Activated naive CD4-positive, alpha-beta T cell treated with anti-CD3 and anti-CD28 coated beads for 36 hours (primary cell): ENCODE measurements at regions of chr5 and their contacts with region 1.

Region 1: GRCh38 chr5:16465544-16466466 is at the start of gene ZNF622:
- DNase-seq: peak; percentile 92
- H3K4me3 Mint-ChIP-seq: peak within 1 kb of the TSS; percentile 96
- H3K27ac Mint-ChIP-seq: peak within 1 kb of the TSS; percentile 93
- H3K4me1 Mint-ChIP-seq: peaks cover 70% of the 10 kb centered on the region
- H3K27me3 Mint-ChIP-seq: no peaks in the 10 kb centered on the region
- total RNA-seq, gene ZNF622: 25.7 to 25.9 TPM

Region 2: GRCh38 chr5:15105796-15106393 is 1359.9 kb before region 1 on chr5:
- CTCF ChIA-PET with region 1: no interaction called
- intact Hi-C with region 1: loop called (anchors 10 kb)
- DNase-seq: peak; percentile 56
- H3K4me3 Mint-ChIP-seq: no peak overlapping the region
- H3K27ac Mint-ChIP-seq: no peak overlapping the region
- H3K4me1 Mint-ChIP-seq: peaks cover 4% of the 10 kb centered on the region
- H3K27me3 Mint-ChIP-seq: no peaks in the 10 kb centered on the region

Region 3: GRCh38 chr5:16508730-16509531 is 43.1 kb after region 1 on chr5:
- CTCF ChIA-PET with region 1: no interaction called
- intact Hi-C with region 1: no loop called
- DNase-seq: no peak
- H3K4me3 Mint-ChIP-seq: no peak overlapping the region
- H3K27ac Mint-ChIP-seq: no peak overlapping the region
- H3K4me1 Mint-ChIP-seq: peaks cover 13% of the 10 kb centered on the region
- H3K27me3 Mint-ChIP-seq: no peaks in the 10 kb centered on the region

Region 4: DNA sequence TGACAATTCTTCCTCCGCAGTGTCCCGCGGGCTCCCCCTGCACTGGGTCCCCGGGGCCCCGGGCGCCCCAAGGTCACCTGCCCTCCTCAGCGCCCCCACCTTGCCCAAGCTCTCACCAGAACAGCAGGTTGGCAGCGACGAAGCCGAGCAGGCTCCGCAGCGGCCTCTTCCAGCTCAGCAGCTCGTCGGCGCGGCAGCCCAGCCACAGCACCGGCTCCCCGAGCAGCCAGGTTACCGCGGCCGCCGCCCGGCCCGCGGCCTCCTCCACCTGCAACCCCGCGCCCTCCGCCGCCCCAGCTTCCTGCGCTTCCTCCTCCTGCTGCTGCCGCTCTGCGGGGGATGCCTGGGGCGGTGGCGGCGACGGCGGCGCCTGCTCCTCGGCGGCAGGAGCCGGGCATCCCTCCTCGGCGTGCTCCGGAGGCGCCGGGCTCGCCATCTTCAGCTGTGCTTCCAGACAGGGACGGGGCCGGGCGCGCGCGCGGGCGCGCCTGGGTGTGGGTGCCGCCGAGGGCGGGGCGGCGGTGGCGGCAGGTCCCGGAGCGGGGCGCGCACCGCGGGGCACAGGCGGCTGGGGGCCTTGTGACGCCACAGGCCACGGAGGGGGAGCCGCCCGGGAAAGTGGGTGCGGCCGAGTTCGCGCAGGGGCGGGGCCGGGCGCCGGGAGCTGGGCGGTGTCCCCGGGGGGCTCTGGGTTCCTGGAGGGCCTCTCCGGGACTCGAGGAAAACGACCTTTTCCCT is 150.9 kb after region 1 on chr5 and contains the start of gene RETREG1:
- CTCF ChIA-PET with region 1: no interaction called
- intact Hi-C with region 1: loop called (anchors 1 kb)
- DNase-seq: peak; percentile 78
- H3K4me3 Mint-ChIP-seq: peak within 1 kb of the TSS; percentile 97
- H3K27ac Mint-ChIP-seq: peak within 1 kb of the TSS; percentile 81
- H3K4me1 Mint-ChIP-seq: peaks cover 34% of the 10 kb centered on the region
- H3K27me3 Mint-ChIP-seq: no peaks in the 10 kb centered on the region
- total RNA-seq, gene RETREG1: 19.3 to 20.0 TPM

Region 5: GRCh38 chr5:16656561-16657191 is 190.9 kb after region 1 on chr5:
- CTCF ChIA-PET with region 1: no interaction called
- intact Hi-C with region 1: loop called (anchors 5 kb)
- DNase-seq: no peak
- H3K4me3 Mint-ChIP-seq: no peak overlapping the region
- H3K27ac Mint-ChIP-seq: no peak overlapping the region
- H3K4me1 Mint-ChIP-seq: peaks cover 16% of the 10 kb centered on the region
- H3K27me3 Mint-ChIP-seq: no peaks in the 10 kb centered on the region

Region 6: DNA sequence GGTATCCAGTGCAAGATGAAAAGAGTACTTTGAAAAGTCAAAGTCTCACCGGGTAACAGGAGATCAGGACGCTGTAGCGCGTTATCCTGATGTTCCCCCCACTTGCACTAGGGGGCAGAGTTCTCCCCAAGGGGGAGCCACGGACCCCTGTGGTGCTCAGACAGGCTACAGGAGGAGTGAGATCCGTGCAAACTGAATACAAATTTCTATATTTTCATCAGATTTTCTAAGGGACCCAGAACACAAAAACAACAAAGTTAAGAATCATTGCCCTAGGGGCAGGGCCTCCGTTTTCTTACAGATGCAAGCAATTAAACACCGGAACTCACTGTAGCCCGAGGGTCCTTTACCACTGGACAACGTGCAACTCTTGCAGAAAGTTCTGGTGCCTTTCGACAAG is 468.3 kb after region 1 on chr5:
- CTCF ChIA-PET with region 1: no interaction called
- intact Hi-C with region 1: loop called (anchors 5 kb)
- DNase-seq: peak; percentile 64
- H3K4me3 Mint-ChIP-seq: peak overlapping the region; percentile 29
- H3K27ac Mint-ChIP-seq: no peak overlapping the region
- H3K4me1 Mint-ChIP-seq: peaks cover 17% of the 10 kb centered on the region
- H3K27me3 Mint-ChIP-seq: peaks cover 70% of the 10 kb centered on the region